ENCODE measurements at regions of chr13 and their contacts with region 1.

Region 1: GRCh38 chr13:29465741-29466293 is 129.7 kb downstream of the SLC7A1 start:
- DNase-seq: peak; percentile 73
- ATAC-seq: peak; percentile 75

Region 2: DNA sequence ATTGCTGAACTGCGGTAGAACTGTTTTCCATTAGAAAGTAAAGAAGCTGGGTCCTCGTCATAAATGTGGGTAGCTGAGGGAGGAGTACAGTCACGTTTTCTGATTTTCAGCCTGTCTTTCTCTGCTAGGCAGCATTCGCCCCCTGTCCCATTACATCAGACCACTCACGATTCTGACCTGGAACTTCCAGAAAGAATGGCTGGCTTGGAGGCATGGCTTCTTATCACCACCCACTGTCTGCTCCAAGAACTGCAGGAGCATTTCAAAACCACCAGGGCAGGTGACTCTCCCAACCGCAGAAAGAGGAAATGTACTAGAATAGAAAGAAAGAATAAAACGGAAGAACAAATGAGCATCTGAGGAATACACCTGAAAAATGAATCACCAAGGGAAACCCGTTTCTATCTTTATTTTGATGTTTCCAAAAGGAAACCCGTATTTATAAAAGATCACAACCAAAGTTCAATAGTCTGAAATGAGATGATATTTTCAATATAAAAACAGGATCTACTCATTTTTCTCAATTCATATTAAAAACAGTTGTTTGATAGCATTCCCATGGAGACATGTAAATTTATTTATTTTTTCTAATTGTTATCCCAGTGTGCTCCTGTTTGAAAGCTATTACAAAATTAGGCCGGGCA is 829.0 kb before region 1 on chr13:
- intact Hi-C with region 1: no loop called
- DNase-seq: no peak
- ATAC-seq: peak; percentile 86

Region 3: GRCh38 chr13:29436291-29436690 is 29.5 kb before region 1 on chr13:
- intact Hi-C with region 1: loop called (anchors 2 kb)
- DNase-seq: no peak
- ATAC-seq: no peak

Measured in left ventricle myocardium superior (tissue), 1 donor.